ENCODE measurements at regions of chr1 and their contacts with region 1.

Region 1: DNA sequence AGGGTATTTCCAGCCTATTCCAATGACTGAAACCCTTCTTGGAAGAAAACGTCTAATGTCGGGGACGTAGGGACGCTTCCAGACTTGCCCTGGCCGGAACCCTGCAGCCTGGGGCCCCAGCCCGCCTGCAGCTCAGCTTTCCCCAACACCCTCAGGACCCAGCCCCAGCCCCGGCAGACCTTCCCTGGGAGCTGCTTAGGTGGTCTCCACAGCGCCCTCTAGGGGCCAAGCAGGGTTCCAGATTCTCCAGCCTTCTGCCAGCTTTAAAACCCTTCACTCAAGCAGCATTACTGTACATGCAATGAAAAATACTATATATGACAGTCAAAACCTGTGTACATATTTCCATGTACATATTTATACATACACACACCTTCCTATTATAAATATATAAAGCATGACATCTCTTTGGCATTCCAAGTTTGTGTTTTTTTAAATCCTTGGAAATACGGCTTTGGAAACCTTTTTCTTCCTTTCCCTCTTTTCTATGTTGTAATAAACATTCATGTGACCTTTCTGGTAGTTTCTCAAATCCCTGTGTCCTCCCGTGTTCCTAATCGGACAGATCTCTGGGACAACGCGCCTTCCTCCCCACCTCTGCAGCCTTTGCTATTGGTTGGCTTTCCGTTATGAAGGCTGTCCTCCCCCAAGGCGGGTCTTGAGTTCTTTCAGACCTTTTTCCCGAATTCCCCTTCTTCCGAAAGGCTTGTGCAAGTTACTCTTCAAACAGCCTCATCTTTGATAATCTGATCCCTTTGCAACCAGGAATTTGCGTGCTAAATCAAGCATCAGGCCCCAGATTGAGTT is 60.3 kb downstream of the STUM start:
- DNase-seq: peak; percentile 64
- H3K4me3 ChIP-seq: no peak overlapping the region
- H3K27ac ChIP-seq: no peak overlapping the region
- H3K4me1 ChIP-seq: peaks cover 42% of the 10 kb centered on the region
- H3K27me3 ChIP-seq: no peaks in the 10 kb centered on the region
- CTCF ChIP-seq: peak; percentile 86

Region 2: GRCh38 chr1:226547754-226548191 is 61.1 kb before region 1 on chr1:
- intact Hi-C with region 1: loop called (anchors 10 kb)
- DNase-seq: peak; percentile 77
- H3K4me3 ChIP-seq: peak overlapping the region; percentile 72
- H3K27ac ChIP-seq: peak overlapping the region; percentile 55
- H3K4me1 ChIP-seq: peaks cover 67% of the 10 kb centered on the region
- H3K27me3 ChIP-seq: peaks cover 22% of the 10 kb centered on the region
- CTCF ChIP-seq: peak; percentile 93

Region 3: DNA sequence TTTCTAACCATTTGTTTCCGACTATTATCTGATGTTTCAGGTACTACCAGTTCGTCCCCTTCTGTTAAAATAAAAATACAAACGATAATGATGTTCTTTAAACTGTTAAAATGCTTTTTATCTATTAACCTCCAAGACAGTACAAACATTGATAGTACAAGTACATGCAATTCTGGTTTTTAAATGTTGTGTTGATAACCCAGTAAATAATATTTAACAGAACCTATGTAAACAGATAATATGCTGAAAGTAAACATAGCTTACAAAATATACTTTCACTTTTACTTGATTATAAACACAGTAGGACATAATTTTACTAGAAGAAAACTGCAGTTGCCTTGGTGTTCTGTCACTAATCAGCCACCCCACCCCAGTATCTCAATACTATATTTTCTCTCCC is 408.1 kb after region 1 on chr1:
- intact Hi-C with region 1: no loop called
- DNase-seq: no peak
- H3K4me3 ChIP-seq: no peak overlapping the region
- H3K27ac ChIP-seq: no peak overlapping the region
- H3K4me1 ChIP-seq: no peaks in the 10 kb centered on the region
- H3K27me3 ChIP-seq: no peaks in the 10 kb centered on the region
- CTCF ChIP-seq: no peak

Measured in left ventricle myocardium inferior (tissue), 1 donor.